Naive thymus-derived CD4-positive, alpha-beta T cell (primary cell): ENCODE measurements at regions of chr3 and their contacts with region 1.

Region 1: DNA sequence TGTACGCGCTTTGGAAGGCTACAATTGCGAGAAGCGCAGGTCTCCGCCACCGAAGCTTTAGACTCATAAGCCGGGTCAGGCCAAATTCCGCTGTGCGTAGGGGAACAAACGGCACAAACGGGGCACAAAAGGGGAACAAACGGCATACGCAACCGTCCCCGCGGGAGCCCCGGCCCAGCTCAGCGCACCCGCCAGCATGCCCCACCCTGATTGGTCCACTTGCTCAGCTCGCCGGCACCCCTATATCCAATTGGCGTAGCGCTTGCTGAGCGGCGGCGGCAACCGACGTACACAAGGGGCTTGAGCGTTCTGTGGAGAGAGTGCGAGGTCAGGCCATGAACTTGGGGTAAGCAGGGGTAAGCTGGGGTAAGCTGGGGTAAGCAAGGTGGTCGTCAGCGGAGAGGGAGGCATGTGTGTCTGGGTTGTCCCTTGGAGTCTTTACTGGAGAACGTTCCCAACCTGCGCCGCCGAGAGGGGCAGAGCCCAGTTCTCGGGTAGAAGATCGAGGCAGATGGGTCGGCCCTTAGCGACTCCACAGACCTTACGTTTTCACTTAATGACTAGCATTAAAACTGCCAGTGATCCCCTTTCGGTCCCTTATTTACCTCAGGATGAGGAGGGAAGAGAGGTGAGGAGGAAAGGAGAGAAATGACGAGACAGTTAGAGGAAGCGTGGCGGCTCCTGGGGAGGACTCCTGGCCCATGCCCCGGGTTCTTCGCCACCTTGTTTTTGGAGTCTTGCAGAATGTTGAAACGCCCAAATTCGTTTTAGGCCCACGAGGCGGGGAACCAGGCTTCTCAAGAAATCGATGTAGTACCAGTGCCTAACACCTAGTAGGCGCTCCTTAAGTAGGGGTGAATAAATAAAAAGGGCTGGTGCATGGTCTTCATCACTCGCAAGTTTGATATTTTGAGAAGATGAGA is at the start of gene CCDC66:
- DNase-seq: peak; percentile 85 to 95 (median 93)
- ATAC-seq: peak; percentile 96
- H3K4me3 ChIP-seq: peak within 1 kb of the TSS; percentile 96
- H3K4me3 Mint-ChIP-seq: peak within 1 kb of the TSS; percentile 91 to 100 (median 98)
- H3K27ac ChIP-seq: peak within 1 kb of the TSS; percentile 99
- H3K27ac Mint-ChIP-seq: peak within 1 kb of the TSS; percentile 93 to 100 (median 98)
- H3K4me1 ChIP-seq: peaks cover 9 to 17% of the 10 kb centered on the region in 2 donors
- H3K4me1 Mint-ChIP-seq: peaks cover 12 to 51% (median 38%) of the 10 kb centered on the region in 7 donors
- H3K27me3 ChIP-seq: no peaks in the 10 kb centered on the region
- H3K27me3 Mint-ChIP-seq: peaks cover 0 to 25% (median 0%) of the 10 kb centered on the region in 5 donors
- total RNA-seq, gene CCDC66: 38.6 to 115 (median 77.3) TPM

Region 2: GRCh38 chr3:56477646-56478045 is 79.5 kb before region 1 on chr3:
- CTCF ChIA-PET with region 1: no interaction called
- POLR2A ChIA-PET with region 1: no interaction called
- intact Hi-C with region 1: no loop called
- DNase-seq: no peak
- ATAC-seq: no peak
- H3K4me3 ChIP-seq: no peak overlapping the region
- H3K4me3 Mint-ChIP-seq: no peak overlapping the region
- H3K27ac ChIP-seq: no peak overlapping the region
- H3K27ac Mint-ChIP-seq: no peak overlapping the region
- H3K4me1 ChIP-seq: no peaks in the 10 kb centered on the region
- H3K4me1 Mint-ChIP-seq: no peaks in the 10 kb centered on the region
- H3K27me3 ChIP-seq: no peaks in the 10 kb centered on the region
- H3K27me3 Mint-ChIP-seq: peaks cover 24 to 64% (median 34%) of the 10 kb centered on the region in 5 donors

Region 3: GRCh38 chr3:56494686-56495322 is 62.4 kb before region 1 on chr3:
- CTCF ChIA-PET with region 1: no interaction called
- POLR2A ChIA-PET with region 1: interaction called, 4 read pairs
- intact Hi-C with region 1: loop called in 1 of 2 experiments (anchors 2 kb)
- DNase-seq: peak; percentile 29 to 84 (median 74)
- ATAC-seq: peak; percentile 99
- H3K4me3 ChIP-seq: no peak overlapping the region
- H3K4me3 Mint-ChIP-seq: no peak overlapping the region
- H3K27ac ChIP-seq: no peak overlapping the region
- H3K27ac Mint-ChIP-seq: peak overlapping the region in 1 of 9 donors; percentile 3
- H3K4me1 ChIP-seq: no peaks in the 10 kb centered on the region
- H3K4me1 Mint-ChIP-seq: peaks cover 0 to 3% (median 0%) of the 10 kb centered on the region in 7 donors
- H3K27me3 ChIP-seq: no peaks in the 10 kb centered on the region
- H3K27me3 Mint-ChIP-seq: peaks cover 1 to 44% (median 38%) of the 10 kb centered on the region in 5 donors

Region 4: GRCh38 chr3:56610669-56611335 is 53.6 kb after region 1 on chr3:
- CTCF ChIA-PET with region 1: interaction called, 4 read pairs
- POLR2A ChIA-PET with region 1: interaction called, 9 read pairs
- intact Hi-C with region 1: loop called (anchors 1 to 2 kb)
- DNase-seq: no peak
- ATAC-seq: no peak
- H3K4me3 ChIP-seq: no peak overlapping the region
- H3K4me3 Mint-ChIP-seq: peak overlapping the region in 7 of 10 donors; percentile 5 to 77 (median 45)
- H3K27ac ChIP-seq: no peak overlapping the region
- H3K27ac Mint-ChIP-seq: peak overlapping the region in 8 of 9 donors; percentile 20 to 94 (median 62)
- H3K4me1 ChIP-seq: peaks cover 29 to 52% of the 10 kb centered on the region in 2 donors
- H3K4me1 Mint-ChIP-seq: peaks cover 46 to 82% (median 78%) of the 10 kb centered on the region in 7 donors
- H3K27me3 ChIP-seq: no peaks in the 10 kb centered on the region
- H3K27me3 Mint-ChIP-seq: no peaks in the 10 kb centered on the region

Region 5: GRCh38 chr3:57227204-57227929 is 670.2 kb after region 1 on chr3 and contains the start of gene APPL1:
- CTCF ChIA-PET with region 1: no interaction called
- POLR2A ChIA-PET with region 1: no interaction called
- intact Hi-C with region 1: loop called (anchors 5 to 10 kb)
- DNase-seq: peak; percentile 76 to 97 (median 82)
- ATAC-seq: peak; percentile 96
- H3K4me3 ChIP-seq: peak within 1 kb of the TSS; percentile 88
- H3K4me3 Mint-ChIP-seq: peak within 1 kb of the TSS; percentile 89 to 95 (median 93)
- H3K27ac ChIP-seq: peak within 1 kb of the TSS; percentile 71
- H3K27ac Mint-ChIP-seq: peak within 1 kb of the TSS; percentile 72 to 90 (median 86)
- H3K4me1 ChIP-seq: peaks cover 9 to 12% of the 10 kb centered on the region in 2 donors
- H3K4me1 Mint-ChIP-seq: peaks cover 17 to 38% (median 29%) of the 10 kb centered on the region in 7 donors
- H3K27me3 ChIP-seq: no peaks in the 10 kb centered on the region
- H3K27me3 Mint-ChIP-seq: peaks cover 0 to 5% (median 0%) of the 10 kb centered on the region in 5 donors
- total RNA-seq, gene APPL1: 25.4 to 42.1 (median 29.2) TPM

Region 6: GRCh38 chr3:57597122-57597923 is 1040.2 kb after region 1 on chr3 and contains the start of gene ARF4:
- CTCF ChIA-PET with region 1: no interaction called
- POLR2A ChIA-PET with region 1: interaction called, 3 read pairs
- intact Hi-C with region 1: loop called in 1 of 2 experiments (anchors 1 kb)
- DNase-seq: peak; percentile 99 to 100 (median 100)
- ATAC-seq: peak; percentile 93
- H3K4me3 ChIP-seq: peak within 1 kb of the TSS; percentile 86
- H3K4me3 Mint-ChIP-seq: peak within 1 kb of the TSS; percentile 91 to 99 (median 98)
- H3K27ac ChIP-seq: peak within 1 kb of the TSS; percentile 94
- H3K27ac Mint-ChIP-seq: peak within 1 kb of the TSS; percentile 95 to 100 (median 99)
- H3K4me1 ChIP-seq: peaks cover 29 to 30% of the 10 kb centered on the region in 2 donors
- H3K4me1 Mint-ChIP-seq: peaks cover 33 to 64% (median 51%) of the 10 kb centered on the region in 7 donors
- H3K27me3 ChIP-seq: no peaks in the 10 kb centered on the region
- H3K27me3 Mint-ChIP-seq: no peaks in the 10 kb centered on the region
- total RNA-seq, gene ARF4: 50.9 to 85.5 (median 57.5) TPM